Activated T-helper 1 cell treated with anti-CD3 and anti-CD28 coated beads, Interleukin-12 subunit alpha, Interleukin-12 subunit beta, Interleukin-2, Interleukin-4 antibody, amounts not matched to agents 30 ng/mL and 10 ng/mL and 1 ng/mL, durations not matched to agents 14 hours and 24 hours and 36 hours (primary cell): ENCODE measurements at regions of chr15 and their contacts with region 1.

Region 1: GRCh38 chr15:90594301-90594701 is 64.6 kb downstream of the CRTC3 start:
- DNase-seq: peak; percentile 75
- H3K4me3 Mint-ChIP-seq: peak overlapping the region; percentile 81
- H3K27ac Mint-ChIP-seq: peak overlapping the region; percentile 99
- H3K4me1 Mint-ChIP-seq: peaks cover 79% of the 10 kb centered on the region
- H3K27me3 Mint-ChIP-seq: no peaks in the 10 kb centered on the region

Region 2: GRCh38 chr15:90425726-90426346 is 168.5 kb before region 1 on chr15:
- intact Hi-C with region 1: no loop called
- DNase-seq: no peak
- H3K4me3 Mint-ChIP-seq: no peak overlapping the region
- H3K27ac Mint-ChIP-seq: peak overlapping the region; percentile 25
- H3K4me1 Mint-ChIP-seq: peaks cover 31% of the 10 kb centered on the region
- H3K27me3 Mint-ChIP-seq: no peaks in the 10 kb centered on the region

Region 3: GRCh38 chr15:90560229-90560776 is 34.0 kb before region 1 on chr15:
- intact Hi-C with region 1: loop called (anchors 1 kb)
- DNase-seq: no peak
- H3K4me3 Mint-ChIP-seq: no peak overlapping the region
- H3K27ac Mint-ChIP-seq: peak overlapping the region; percentile 9
- H3K4me1 Mint-ChIP-seq: peaks cover 85% of the 10 kb centered on the region
- H3K27me3 Mint-ChIP-seq: no peaks in the 10 kb centered on the region

Region 4: GRCh38 chr15:90571063-90571541 is 23.2 kb before region 1 on chr15:
- intact Hi-C with region 1: loop called (anchors 1 kb)
- DNase-seq: no peak
- H3K4me3 Mint-ChIP-seq: peak overlapping the region; percentile 38
- H3K27ac Mint-ChIP-seq: peak overlapping the region; percentile 64
- H3K4me1 Mint-ChIP-seq: peaks cover 92% of the 10 kb centered on the region
- H3K27me3 Mint-ChIP-seq: no peaks in the 10 kb centered on the region

Region 5: GRCh38 chr15:90620379-90621067 is 26.2 kb after region 1 on chr15:
- intact Hi-C with region 1: loop called (anchors 1 kb)
- DNase-seq: no peak
- H3K4me3 Mint-ChIP-seq: peak overlapping the region; percentile 21
- H3K27ac Mint-ChIP-seq: peak overlapping the region; percentile 83
- H3K4me1 Mint-ChIP-seq: peaks cover 37% of the 10 kb centered on the region
- H3K27me3 Mint-ChIP-seq: no peaks in the 10 kb centered on the region